ENCODE measurements at regions of chr13 and their contacts with region 1.

Region 1: GRCh38 chr13:26255691-26256277 is 1.9 kb downstream of the CDK8 start:
- DNase-seq: no peak
- H3K4me3 ChIP-seq: peak overlapping the region; percentile 89
- CTCF ChIP-seq: no peak

Region 2: DNA sequence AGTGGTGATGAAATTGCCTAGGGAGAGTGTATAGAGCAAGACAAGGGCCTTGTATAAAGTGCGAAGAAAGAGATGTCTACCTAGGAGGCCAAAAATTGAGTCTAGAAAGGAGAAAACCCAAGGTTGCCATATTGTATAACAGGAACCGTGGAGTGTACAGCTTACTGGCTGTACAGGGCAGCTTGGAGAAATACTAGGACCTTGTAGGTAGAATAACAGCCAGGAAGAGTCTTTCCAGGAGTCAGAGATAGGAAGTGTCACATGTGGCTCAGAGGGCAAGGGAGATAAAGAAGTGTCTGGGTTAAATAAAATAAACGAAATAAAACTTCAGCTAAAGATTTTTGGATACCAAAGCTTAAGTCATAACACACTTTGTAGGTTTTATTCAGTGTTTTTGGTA is 10.5 kb after region 1 on chr13:
- CTCF ChIA-PET with region 1: interaction called, 10 read pairs
- POLR2A ChIA-PET with region 1: no interaction called
- DNase-seq: no peak
- H3K4me3 ChIP-seq: no peak overlapping the region
- CTCF ChIP-seq: no peak